ENCODE measurements at regions of chr4 and their contacts with region 1.

Region 1: GRCh38 chr4:77193511-77194102 is 36.6 kb downstream of the CCNG2 start:
- DNase-seq: peak; percentile 42 to 77 (median 68)
- H3K4me3 ChIP-seq: peak overlapping the region; percentile 28
- H3K4me3 Mint-ChIP-seq: peak overlapping the region; percentile 70 to 93 (median 88)
- H3K27ac ChIP-seq: no peak overlapping the region
- H3K27ac Mint-ChIP-seq: peak overlapping the region in 7 of 8 donors; percentile 40 to 91 (median 80)
- H3K4me1 ChIP-seq: peaks cover 8% of the 10 kb centered on the region
- H3K4me1 Mint-ChIP-seq: peaks cover 13 to 17% (median 17%) of the 10 kb centered on the region in 3 donors
- H3K27me3 ChIP-seq: no peaks in the 10 kb centered on the region
- H3K27me3 Mint-ChIP-seq: peaks cover 1 to 7% of the 10 kb centered on the region in 2 donors

Region 2: GRCh38 chr4:75790024-75790423 is 1403.6 kb before region 1 on chr4:
- CTCF ChIA-PET with region 1: no interaction called
- POLR2A ChIA-PET with region 1: interaction called, 15 read pairs
- DNase-seq: no peak
- H3K4me3 ChIP-seq: no peak overlapping the region
- H3K4me3 Mint-ChIP-seq: no peak overlapping the region
- H3K27ac ChIP-seq: no peak overlapping the region
- H3K27ac Mint-ChIP-seq: peak overlapping the region in 2 of 8 donors; percentile 23 to 46
- H3K4me1 ChIP-seq: no peaks in the 10 kb centered on the region
- H3K4me1 Mint-ChIP-seq: peaks cover 0 to 3% (median 0%) of the 10 kb centered on the region in 3 donors
- H3K27me3 ChIP-seq: no peaks in the 10 kb centered on the region
- H3K27me3 Mint-ChIP-seq: no peaks in the 10 kb centered on the region

Region 3: DNA sequence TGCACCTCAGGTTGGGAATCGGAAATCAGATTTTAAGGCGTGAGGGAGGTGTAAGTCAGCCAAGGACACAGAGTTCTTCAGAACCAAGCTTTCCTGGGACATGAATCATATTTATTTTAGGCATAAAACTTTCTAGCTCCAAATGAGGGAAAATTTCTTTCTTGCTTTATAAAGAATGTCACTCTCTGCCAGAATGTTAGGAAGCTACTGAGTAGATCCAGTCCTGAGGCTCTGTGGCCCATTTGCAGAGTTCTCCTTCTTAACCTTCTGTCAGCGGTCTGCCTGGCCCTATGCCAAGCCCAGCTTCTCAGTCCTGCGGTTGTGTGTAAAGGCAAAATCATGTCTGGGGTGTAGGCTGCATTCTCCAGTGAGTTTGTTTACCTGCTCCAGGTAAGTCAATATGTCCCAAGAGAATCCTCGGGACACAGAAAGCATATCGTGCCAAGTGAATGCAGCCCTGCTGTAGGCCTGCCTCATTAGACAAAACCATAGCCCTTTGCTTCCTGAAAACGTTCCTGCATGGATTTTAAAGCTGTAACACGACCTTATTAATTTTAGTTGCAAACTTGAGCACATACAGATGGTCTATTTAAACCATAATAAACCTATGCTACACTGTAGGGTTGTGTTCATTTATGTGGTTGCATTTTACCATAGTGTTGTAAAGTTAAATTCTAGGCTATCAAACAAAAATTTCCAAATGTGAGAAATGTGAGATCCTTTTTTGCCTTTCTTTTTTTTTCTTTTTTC is 88.6 kb before region 1 on chr4:
- CTCF ChIA-PET with region 1: no interaction called
- POLR2A ChIA-PET with region 1: no interaction called
- DNase-seq: no peak
- H3K4me3 ChIP-seq: no peak overlapping the region
- H3K4me3 Mint-ChIP-seq: no peak overlapping the region
- H3K27ac ChIP-seq: no peak overlapping the region
- H3K27ac Mint-ChIP-seq: no peak overlapping the region
- H3K4me1 ChIP-seq: peaks cover 8% of the 10 kb centered on the region
- H3K4me1 Mint-ChIP-seq: peaks cover 8 to 10% (median 9%) of the 10 kb centered on the region in 3 donors
- H3K27me3 ChIP-seq: no peaks in the 10 kb centered on the region
- H3K27me3 Mint-ChIP-seq: peaks cover 6 to 28% of the 10 kb centered on the region in 2 donors

Measured in CD8-positive, alpha-beta memory T cell (primary cell).